Activated CD4-positive, alpha-beta T cell treated with anti-CD3 and anti-CD28 coated beads, Interleukin-2, amount 10 ng/mL, durations not matched to agents 7 days and 5 days (primary cell): ENCODE measurements at regions of chr22 and their contacts with region 1.

Region 1: DNA sequence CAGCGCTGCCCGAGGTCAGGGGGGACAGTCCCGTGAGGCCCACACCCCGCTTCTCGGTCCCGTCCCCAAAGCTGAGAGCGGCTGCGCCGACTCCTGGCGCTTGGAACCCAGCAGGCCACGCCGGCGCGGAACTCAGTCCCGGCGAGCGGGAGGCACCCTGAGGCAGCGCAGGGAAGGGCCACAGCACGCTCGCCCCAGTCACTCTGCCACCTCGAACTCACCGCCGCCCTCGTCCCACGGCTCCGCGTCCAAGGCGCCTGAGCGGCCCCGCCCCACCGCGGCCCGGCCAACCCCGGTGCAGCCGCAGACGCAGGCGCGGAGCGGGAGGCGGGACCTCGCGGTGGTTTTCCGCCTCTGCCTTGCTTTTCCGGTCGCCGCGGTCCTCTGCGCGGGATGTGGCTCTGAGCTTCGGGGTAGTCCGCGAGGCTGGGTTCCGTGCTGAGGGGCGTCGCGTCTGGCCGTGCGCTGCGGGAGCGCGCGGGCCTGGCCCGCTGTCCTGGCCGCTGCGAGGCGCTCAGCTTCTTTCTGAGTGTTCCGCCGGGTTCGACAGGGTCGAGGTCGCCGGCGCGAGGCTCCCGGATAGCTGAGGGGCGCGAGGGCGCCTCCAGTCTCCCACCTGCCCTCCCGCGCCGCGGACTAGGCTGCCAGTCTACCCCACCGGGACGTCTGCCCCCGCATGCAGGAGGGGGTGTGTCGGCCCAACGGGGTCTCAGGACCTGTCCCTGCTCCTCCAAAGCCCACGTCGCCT is at the start of gene CDPF1:
- DNase-seq: peak; percentile 94
- H3K4me3 Mint-ChIP-seq: peak within 1 kb of the TSS; percentile 82
- H3K27ac Mint-ChIP-seq: peak within 1 kb of the TSS; percentile 92
- H3K4me1 Mint-ChIP-seq: peaks cover 25% of the 10 kb centered on the region
- H3K27me3 Mint-ChIP-seq: no peaks in the 10 kb centered on the region
- total RNA-seq, gene CDPF1: 9.2 to 10.8 TPM

Region 2: DNA sequence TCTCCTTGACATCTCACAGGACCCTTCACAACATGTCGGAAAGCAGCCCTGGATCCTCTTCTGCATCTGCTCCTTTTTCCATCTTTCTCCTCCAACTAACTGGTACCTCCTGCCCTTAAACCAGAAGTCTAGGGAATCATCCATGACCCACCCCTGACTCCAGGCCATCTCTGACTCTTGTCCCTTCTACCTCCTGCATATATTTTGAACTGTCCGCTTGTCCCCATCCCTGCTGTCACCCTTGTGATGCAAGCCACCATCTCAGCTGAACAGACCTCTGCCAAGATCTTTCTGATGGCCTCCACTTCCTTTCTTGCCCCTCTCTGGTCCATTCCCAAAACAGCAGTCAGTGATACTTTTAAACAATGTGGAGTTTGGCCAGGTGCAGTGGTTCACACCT is 829.7 kb before region 1 on chr22:
- CTCF ChIA-PET with region 1: no interaction called
- POLR2A ChIA-PET with region 1: interaction called, 11 read pairs
- DNase-seq: no peak
- H3K4me3 Mint-ChIP-seq: no peak overlapping the region
- H3K27ac Mint-ChIP-seq: no peak overlapping the region
- H3K4me1 Mint-ChIP-seq: peaks cover 3% of the 10 kb centered on the region
- H3K27me3 Mint-ChIP-seq: no peaks in the 10 kb centered on the region

Region 3: DNA sequence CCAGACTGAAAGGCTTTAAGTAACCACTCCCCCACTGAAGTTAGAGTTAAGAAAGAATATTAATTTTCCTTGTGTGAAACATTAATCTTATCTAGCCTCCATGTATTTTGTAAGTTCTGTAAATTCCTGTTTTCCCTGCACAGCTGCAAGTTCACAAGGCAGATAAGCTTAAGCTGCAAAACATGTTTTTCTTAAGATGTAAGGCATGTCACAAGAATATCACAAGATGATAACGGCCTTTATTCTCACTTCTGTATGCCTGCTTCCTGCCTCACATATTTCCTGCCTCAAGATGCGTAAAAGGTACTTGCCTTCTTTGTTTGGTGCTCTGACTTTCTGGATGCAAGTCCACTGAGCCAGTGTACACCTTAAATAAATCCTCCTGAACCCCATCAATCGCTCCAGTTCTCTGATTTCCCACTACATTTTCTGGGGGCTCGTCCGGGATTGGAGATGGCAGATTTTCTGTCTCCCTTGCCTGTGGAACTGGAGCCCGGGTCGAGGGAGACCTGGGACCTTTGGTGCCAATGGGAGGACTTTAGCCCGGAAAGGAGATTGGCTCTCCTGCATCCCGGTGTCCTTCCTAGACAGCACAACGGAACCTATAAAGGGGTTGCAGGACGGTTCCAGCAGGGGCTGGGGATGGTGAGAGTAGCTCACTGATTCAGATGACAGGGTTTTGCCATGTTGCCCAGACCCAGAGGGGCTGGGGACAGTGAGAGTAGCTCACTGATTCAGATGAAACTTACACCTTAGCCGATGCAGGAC is 69.7 kb before region 1 on chr22:
- CTCF ChIA-PET with region 1: no interaction called
- POLR2A ChIA-PET with region 1: no interaction called
- DNase-seq: no peak
- H3K4me3 Mint-ChIP-seq: no peak overlapping the region
- H3K27ac Mint-ChIP-seq: no peak overlapping the region
- H3K4me1 Mint-ChIP-seq: peaks cover 2% of the 10 kb centered on the region
- H3K27me3 Mint-ChIP-seq: no peaks in the 10 kb centered on the region

Region 4: GRCh38 chr22:46213052-46213451 is 37.2 kb before region 1 on chr22:
- CTCF ChIA-PET with region 1: no interaction called
- POLR2A ChIA-PET with region 1: no interaction called
- DNase-seq: no peak
- H3K4me3 Mint-ChIP-seq: no peak overlapping the region
- H3K27ac Mint-ChIP-seq: no peak overlapping the region
- H3K4me1 Mint-ChIP-seq: peaks cover 6% of the 10 kb centered on the region
- H3K27me3 Mint-ChIP-seq: no peaks in the 10 kb centered on the region

Region 5: DNA sequence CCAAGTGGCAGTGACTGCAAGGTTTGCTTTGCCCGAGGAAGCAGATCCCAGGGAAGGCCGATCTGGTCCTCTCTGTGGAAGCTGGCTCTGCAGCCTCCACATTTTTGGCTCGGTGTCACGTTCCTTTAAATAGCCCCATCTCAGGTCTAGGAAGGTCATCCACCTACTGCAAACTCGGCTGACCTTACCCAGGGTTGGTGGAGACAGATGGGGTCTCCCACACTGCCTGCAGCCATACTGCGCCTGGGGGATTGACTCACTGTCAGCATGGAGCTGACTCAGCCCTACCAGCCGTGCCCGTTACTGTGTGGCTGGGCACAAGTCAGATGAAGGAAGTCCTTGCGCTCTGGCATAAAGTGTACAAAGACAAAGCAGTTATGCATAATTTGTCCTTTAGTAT is 17.0 kb before region 1 on chr22:
- CTCF ChIA-PET with region 1: no interaction called
- POLR2A ChIA-PET with region 1: no interaction called
- DNase-seq: no peak
- H3K4me3 Mint-ChIP-seq: no peak overlapping the region
- H3K27ac Mint-ChIP-seq: no peak overlapping the region
- H3K4me1 Mint-ChIP-seq: no peaks in the 10 kb centered on the region
- H3K27me3 Mint-ChIP-seq: no peaks in the 10 kb centered on the region

Region 6: GRCh38 chr22:46335201-46336118 is 85.3 kb after region 1 on chr22 and contains the start of gene TRMU:
- CTCF ChIA-PET with region 1: no interaction called
- POLR2A ChIA-PET with region 1: no interaction called
- DNase-seq: peak; percentile 77
- H3K4me3 Mint-ChIP-seq: peak within 1 kb of the TSS; percentile 98
- H3K27ac Mint-ChIP-seq: peak within 1 kb of the TSS; percentile 95
- H3K4me1 Mint-ChIP-seq: peaks cover 35% of the 10 kb centered on the region
- H3K27me3 Mint-ChIP-seq: no peaks in the 10 kb centered on the region
- total RNA-seq, gene TRMU: 74.3 to 74.4 TPM